ENCODE measurements at regions of chr11 and their contacts with region 1.

Region 1: GRCh38 chr11:72471005-72471898 is 36.9 kb upstream of the CLPB start:
- DNase-seq: peak; percentile 72
- ATAC-seq: peak; percentile 97
- H3K4me3 Mint-ChIP-seq: peak overlapping the region; percentile 27
- H3K27ac Mint-ChIP-seq: peak overlapping the region; percentile 28; the same call in 1 of the 2 replicates
- H3K4me1 Mint-ChIP-seq: peaks cover 7% of the 10 kb centered on the region
- H3K27me3 Mint-ChIP-seq: peaks cover 16% of the 10 kb centered on the region
- CTCF ChIP-seq: peak; percentile 58

Region 2: GRCh38 chr11:72446902-72447769 is 24.1 kb before region 1 on chr11:
- CTCF ChIA-PET with region 1: interaction called, 34 read pairs
- POLR2A ChIA-PET with region 1: no interaction called
- DNase-seq: no peak
- ATAC-seq: peak; percentile 78
- H3K4me3 Mint-ChIP-seq: no peak overlapping the region
- H3K27ac Mint-ChIP-seq: no peak overlapping the region
- H3K4me1 Mint-ChIP-seq: no peaks in the 10 kb centered on the region
- H3K27me3 Mint-ChIP-seq: peaks cover 7% of the 10 kb centered on the region; the same call in 1 of the 2 replicates
- CTCF ChIP-seq: 0 out of 2 replicates have a peak, but pooled peaks have one; percentile 12

Region 3: GRCh38 chr11:72493426-72494108 is 22.3 kb after region 1 on chr11:
- CTCF ChIA-PET with region 1: interaction called, 19 read pairs
- POLR2A ChIA-PET with region 1: no interaction called
- DNase-seq: no peak
- ATAC-seq: peak; percentile 55; the same call in 1 of the 2 replicates
- H3K4me3 Mint-ChIP-seq: no peak overlapping the region
- H3K27ac Mint-ChIP-seq: no peak overlapping the region
- H3K4me1 Mint-ChIP-seq: no peaks in the 10 kb centered on the region
- H3K27me3 Mint-ChIP-seq: no peaks in the 10 kb centered on the region
- CTCF ChIP-seq: no peak

Region 4: GRCh38 chr11:72553706-72554105 is 82.5 kb after region 1 on chr11:
- CTCF ChIA-PET with region 1: interaction called, 215 read pairs
- POLR2A ChIA-PET with region 1: no interaction called
- DNase-seq: peak; percentile 73
- ATAC-seq: peak; percentile 95
- H3K4me3 Mint-ChIP-seq: no peak overlapping the region
- H3K27ac Mint-ChIP-seq: no peak overlapping the region
- H3K4me1 Mint-ChIP-seq: peaks cover 5% of the 10 kb centered on the region
- H3K27me3 Mint-ChIP-seq: peaks cover 5% of the 10 kb centered on the region
- CTCF ChIP-seq: peak; percentile 57; the same call in 1 of the 2 replicates

Region 5: DNA sequence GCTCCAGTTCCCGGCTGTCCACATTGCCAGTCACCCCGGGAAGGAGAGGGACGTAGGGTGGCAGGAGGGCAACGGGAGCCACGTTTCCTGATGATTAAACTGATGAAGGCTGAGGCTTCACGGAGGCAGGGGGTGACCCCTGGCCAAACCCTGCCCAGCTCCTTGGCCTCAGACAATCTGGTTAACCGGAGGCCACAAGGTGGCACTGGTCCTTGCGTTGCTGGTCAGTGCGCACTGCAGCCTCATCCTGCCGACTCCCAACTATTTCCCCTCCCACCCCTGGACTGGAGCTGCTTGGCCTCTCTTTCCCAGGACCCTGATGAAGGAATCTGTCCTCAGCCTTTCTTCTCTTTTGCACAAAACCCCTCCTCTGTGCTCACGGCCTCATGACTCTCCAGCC is 127.7 kb after region 1 on chr11:
- CTCF ChIA-PET with region 1: interaction called, 27 read pairs
- POLR2A ChIA-PET with region 1: no interaction called
- DNase-seq: peak; percentile 68
- ATAC-seq: peak; percentile 75
- H3K4me3 Mint-ChIP-seq: no peak overlapping the region
- H3K27ac Mint-ChIP-seq: no peak overlapping the region
- H3K4me1 Mint-ChIP-seq: peaks cover 35% of the 10 kb centered on the region
- H3K27me3 Mint-ChIP-seq: peaks cover 13% of the 10 kb centered on the region
- CTCF ChIP-seq: peak; percentile 15; the same call in 1 of the 2 replicates

Region 6: GRCh38 chr11:72676861-72677341 is 205.6 kb after region 1 on chr11:
- CTCF ChIA-PET with region 1: interaction called, 10 read pairs
- POLR2A ChIA-PET with region 1: interaction called, 3 read pairs
- DNase-seq: peak; percentile 94
- ATAC-seq: peak; percentile 79
- H3K4me3 Mint-ChIP-seq: peak overlapping the region; percentile 53
- H3K27ac Mint-ChIP-seq: no peak overlapping the region
- H3K4me1 Mint-ChIP-seq: peaks cover 41% of the 10 kb centered on the region
- H3K27me3 Mint-ChIP-seq: peaks cover 91% of the 10 kb centered on the region
- CTCF ChIP-seq: no peak